CD4-positive, alpha-beta T cell (primary cell): ENCODE measurements at regions of chr10 and their contacts with region 1.

Region 1: GRCh38 chr10:58299580-58299979 is 30.6 kb downstream of the CISD1 start:
- DNase-seq: peak; percentile 24 to 81 (median 49)
- ATAC-seq: peak; percentile 86
- H3K4me3 ChIP-seq: no peak overlapping the region
- H3K4me3 Mint-ChIP-seq: no peak overlapping the region
- H3K27ac ChIP-seq: no peak overlapping the region
- H3K27ac Mint-ChIP-seq: no peak overlapping the region
- H3K4me1 ChIP-seq: no peaks in the 10 kb centered on the region
- H3K4me1 Mint-ChIP-seq: peaks cover 3% of the 10 kb centered on the region
- H3K27me3 ChIP-seq: no peaks in the 10 kb centered on the region
- H3K27me3 Mint-ChIP-seq: peaks cover 8% of the 10 kb centered on the region
- CTCF ChIP-seq: peak; percentile 95

Region 2: DNA sequence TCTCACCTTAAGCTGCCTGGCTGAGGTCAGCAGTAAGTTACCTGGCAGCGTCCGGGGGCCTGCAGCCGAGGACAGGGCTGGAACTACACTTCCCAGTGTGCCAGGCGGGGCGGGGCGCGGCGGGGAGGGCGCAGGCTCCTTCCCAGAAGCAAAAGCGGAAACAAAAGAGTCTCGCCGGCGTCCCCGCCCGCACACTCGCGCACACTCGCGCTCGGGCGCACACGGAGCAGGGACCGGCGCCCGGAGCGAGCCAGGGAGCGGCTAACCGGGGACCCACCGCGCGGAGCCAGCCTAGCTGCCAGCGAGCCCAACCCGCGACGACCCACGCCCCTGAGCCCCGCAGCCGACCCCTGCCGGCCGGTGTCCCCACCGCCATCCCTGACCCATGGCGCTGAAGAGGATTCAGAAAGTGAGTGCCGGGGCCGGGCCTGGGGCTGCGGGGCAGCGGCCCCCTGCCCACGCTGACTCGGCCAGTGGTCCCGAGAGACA is 35.3 kb after region 1 on chr10 and contains the start of gene UBE2D1:
- CTCF ChIA-PET with region 1: no interaction called
- POLR2A ChIA-PET with region 1: no interaction called
- intact Hi-C with region 1: loop called in 1 of 2 experiments (anchors 5 kb)
- DNase-seq: peak; percentile 65 to 87 (median 80)
- ATAC-seq: peak; percentile 98
- H3K4me3 ChIP-seq: peak within 1 kb of the TSS; percentile 79
- H3K4me3 Mint-ChIP-seq: peak within 1 kb of the TSS; percentile 92
- H3K27ac ChIP-seq: no peak within 1 kb of the TSS
- H3K27ac Mint-ChIP-seq: peak within 1 kb of the TSS; percentile 50
- H3K4me1 ChIP-seq: peaks cover 12% of the 10 kb centered on the region
- H3K4me1 Mint-ChIP-seq: peaks cover 45% of the 10 kb centered on the region
- H3K27me3 ChIP-seq: no peaks in the 10 kb centered on the region
- H3K27me3 Mint-ChIP-seq: peaks cover 6% of the 10 kb centered on the region
- CTCF ChIP-seq: no peak
- total RNA-seq, gene UBE2D1: 6.0 to 7.8 TPM

Region 3: DNA sequence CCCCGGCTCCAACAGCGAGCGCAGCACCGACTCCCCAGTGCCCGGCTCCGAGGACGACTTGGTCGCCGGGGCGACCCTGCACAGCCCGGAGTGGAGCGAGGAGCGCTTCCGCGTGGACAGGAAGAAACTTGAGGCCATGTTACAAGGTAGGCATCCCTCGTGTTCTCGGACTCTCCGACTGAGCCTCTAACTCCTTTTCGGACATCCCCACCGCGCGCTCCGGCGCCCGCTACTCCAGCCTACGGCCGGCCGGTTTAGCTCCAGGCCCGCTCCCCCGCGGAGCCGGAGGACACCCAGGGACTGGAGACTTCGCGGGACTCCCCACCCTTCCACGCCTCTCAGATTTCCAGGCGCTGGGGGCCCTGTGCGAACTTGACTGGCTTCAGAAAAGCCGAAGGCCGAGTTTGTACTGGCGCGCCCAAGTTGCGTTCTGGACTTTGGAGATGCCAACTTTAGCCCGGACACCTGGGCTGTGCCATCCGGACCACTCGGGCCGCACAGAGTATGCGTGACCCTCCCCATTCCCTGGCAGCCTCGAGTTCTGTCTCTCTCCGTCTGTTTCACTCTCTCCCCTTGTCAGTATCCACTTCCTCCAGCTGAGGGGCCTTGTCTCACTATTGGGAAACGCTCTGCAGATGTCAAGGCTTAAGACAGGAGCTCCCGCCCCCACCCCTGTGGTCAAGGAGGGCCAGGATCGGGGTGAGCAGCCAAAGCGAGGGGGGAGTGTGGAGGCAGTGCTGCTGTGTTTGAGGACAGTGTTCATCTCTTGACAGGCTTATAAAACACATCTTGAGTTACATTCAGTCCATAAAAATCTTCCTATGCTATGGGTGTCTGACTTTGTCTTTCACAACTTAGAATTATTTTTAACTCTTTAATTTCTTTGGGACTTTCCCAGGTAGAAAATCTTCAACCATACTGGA is 213.9 kb after region 1 on chr10:
- CTCF ChIA-PET with region 1: no interaction called
- POLR2A ChIA-PET with region 1: no interaction called
- intact Hi-C with region 1: loop called in 1 of 2 experiments (anchors 10 kb)
- DNase-seq: peak in 2 of 14 experiments; percentile 6 to 8
- ATAC-seq: no peak
- H3K4me3 ChIP-seq: peak overlapping the region; percentile 35
- H3K4me3 Mint-ChIP-seq: peak overlapping the region; percentile 60
- H3K27ac ChIP-seq: no peak overlapping the region
- H3K27ac Mint-ChIP-seq: no peak overlapping the region
- H3K4me1 ChIP-seq: peaks cover 7% of the 10 kb centered on the region
- H3K4me1 Mint-ChIP-seq: peaks cover 12% of the 10 kb centered on the region
- H3K27me3 ChIP-seq: peaks cover 21 to 56% of the 10 kb centered on the region in 2 experiments
- H3K27me3 Mint-ChIP-seq: peaks cover 54% of the 10 kb centered on the region
- CTCF ChIP-seq: no peak